Dorsolateral prefrontal cortex (tissue), 120 donors: ENCODE measurements at regions of chr3 and their contacts with region 1.

Region 1: GRCh38 chr3:128170805-128171516 is 17.7 kb downstream of the EEFSEC start:
- DNase-seq: peak in 7 of 10 donors; percentile 14 to 68 (median 60)
- H3K4me3 ChIP-seq: no peak overlapping the region
- H3K27ac ChIP-seq: no peak overlapping the region
- H3K27me3 ChIP-seq: no peaks in the 10 kb centered on the region
- CTCF ChIP-seq: peak; percentile 50 to 93 (median 76)

Region 2: GRCh38 chr3:128322066-128323022 is 151.4 kb after region 1 on chr3:
- intact Hi-C with region 1: loop called (anchors 5 to 10 kb)
- DNase-seq: peak in 5 of 10 donors; percentile 10 to 59 (median 49)
- H3K4me3 ChIP-seq: no peak overlapping the region
- H3K27ac ChIP-seq: no peak overlapping the region
- H3K27me3 ChIP-seq: no peaks in the 10 kb centered on the region
- CTCF ChIP-seq: peak in 54 of 56 donors; percentile 29 to 75 (median 56)

Region 3: GRCh38 chr3:128497387-128498126 is 326.6 kb after region 1 on chr3:
- intact Hi-C with region 1: loop called (anchors 5 to 10 kb)
- DNase-seq: peak; percentile 66 to 85 (median 74)
- H3K4me3 ChIP-seq: peak overlapping the region; percentile 38 to 79 (median 62)
- H3K27ac ChIP-seq: peak overlapping the region in 1 of 59 donors; percentile 39
- H3K27me3 ChIP-seq: peaks cover 2 to 86% (median 60%) of the 10 kb centered on the region in 45 donors
- CTCF ChIP-seq: peak; percentile 22 to 97 (median 74)

Region 4: DNA sequence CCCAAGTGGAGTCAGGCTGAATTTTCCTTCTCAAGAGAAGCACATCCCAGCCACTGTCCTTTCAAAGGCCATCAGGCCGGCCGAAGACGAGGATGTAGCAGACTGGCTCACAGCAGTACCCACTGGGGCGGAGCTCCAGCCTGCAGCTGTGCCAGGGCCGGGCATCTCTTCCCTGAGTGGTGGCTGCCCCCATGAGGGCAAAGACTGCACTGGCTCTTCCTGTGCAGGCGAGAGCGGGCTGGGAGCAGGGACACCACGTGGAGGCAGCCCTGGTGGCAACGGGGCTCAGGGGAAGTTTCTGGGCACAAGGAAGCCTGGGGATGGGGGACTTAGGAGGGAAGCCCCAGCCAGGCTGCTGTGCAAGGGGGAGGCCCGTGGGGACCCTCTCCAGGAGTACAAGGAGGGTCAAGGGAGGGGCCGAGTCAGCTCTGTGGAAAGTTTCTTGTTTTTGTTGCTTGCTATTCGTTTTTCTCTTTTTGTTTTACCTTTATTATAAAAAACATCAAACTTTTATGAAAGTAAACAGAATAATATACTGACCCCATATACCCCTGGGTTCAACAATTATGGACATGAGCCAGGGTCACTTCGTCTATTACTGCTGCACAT is 413.6 kb after region 1 on chr3:
- intact Hi-C with region 1: loop called (anchors 5 kb)
- DNase-seq: peak; percentile 63 to 82 (median 79)
- H3K4me3 ChIP-seq: peak overlapping the region in 1 of 59 donors; percentile 12
- H3K27ac ChIP-seq: peak overlapping the region in 1 of 59 donors; percentile 16
- H3K27me3 ChIP-seq: no peaks in the 10 kb centered on the region
- CTCF ChIP-seq: peak; percentile 37 to 95 (median 81)